Astrocyte of the cerebellum (primary cell): ENCODE measurements at regions of chr19 and their contacts with region 1.

Region 1: GRCh38 chr19:38122402-38123093 is 101.5 kb downstream of the DPF1 start:
- DNase-seq: no peak
- H3K4me3 ChIP-seq: no peak overlapping the region
- CTCF ChIP-seq: no peak

Region 2: GRCh38 chr19:38049105-38049649 is 73.4 kb before region 1 on chr19:
- in situ Hi-C with region 1: loop called (anchors 10 kb)
- DNase-seq: no peak
- H3K4me3 ChIP-seq: no peak overlapping the region
- CTCF ChIP-seq: no peak